Cardiac septum (tissue), 1 donor: ENCODE measurements at regions of chr10 and their contacts with region 1.

Region 1: DNA sequence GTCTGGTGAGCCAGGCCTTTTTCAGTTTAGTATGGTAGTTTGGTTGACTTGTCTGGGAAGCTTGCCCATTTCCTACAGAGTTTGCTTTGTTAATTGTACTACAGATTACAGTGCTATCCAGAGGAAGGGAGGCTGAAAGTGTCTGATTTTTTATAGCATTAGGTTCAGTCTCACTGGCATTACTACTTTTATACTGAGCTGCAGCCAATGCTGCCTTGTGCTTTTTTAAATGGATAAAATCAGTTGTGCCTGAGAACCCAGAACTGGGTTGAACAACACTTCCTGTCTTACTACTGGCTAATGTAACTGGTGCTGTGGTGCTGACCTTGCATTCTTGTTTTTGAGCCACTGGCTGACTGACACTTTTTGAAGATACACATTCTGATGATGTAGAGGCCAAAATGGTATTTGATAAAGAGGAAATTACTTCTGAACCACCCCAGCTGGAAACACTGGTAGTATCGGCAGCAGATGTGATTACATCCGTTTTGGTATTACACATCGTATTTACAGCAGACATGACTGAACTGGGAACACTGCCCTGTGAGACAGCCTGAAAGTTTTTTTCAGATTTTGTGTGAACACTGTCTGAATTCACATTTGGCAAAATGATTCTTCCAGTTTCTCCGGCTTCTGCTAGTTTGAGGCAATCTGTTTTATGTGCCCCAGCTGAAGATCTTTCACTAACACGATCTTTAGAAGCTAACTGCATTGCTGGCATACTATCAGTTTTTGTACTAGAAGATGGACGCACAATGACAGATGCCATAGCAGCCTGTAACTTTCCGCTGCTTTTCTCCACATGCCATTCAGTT is 74.1 kb downstream of the NRBF2 start:
- DNase-seq: no peak

Region 2: GRCh38 chr10:63013755-63014154 is 193.4 kb before region 1 on chr10:
- intact Hi-C with region 1: no loop called
- DNase-seq: no peak

Region 3: DNA sequence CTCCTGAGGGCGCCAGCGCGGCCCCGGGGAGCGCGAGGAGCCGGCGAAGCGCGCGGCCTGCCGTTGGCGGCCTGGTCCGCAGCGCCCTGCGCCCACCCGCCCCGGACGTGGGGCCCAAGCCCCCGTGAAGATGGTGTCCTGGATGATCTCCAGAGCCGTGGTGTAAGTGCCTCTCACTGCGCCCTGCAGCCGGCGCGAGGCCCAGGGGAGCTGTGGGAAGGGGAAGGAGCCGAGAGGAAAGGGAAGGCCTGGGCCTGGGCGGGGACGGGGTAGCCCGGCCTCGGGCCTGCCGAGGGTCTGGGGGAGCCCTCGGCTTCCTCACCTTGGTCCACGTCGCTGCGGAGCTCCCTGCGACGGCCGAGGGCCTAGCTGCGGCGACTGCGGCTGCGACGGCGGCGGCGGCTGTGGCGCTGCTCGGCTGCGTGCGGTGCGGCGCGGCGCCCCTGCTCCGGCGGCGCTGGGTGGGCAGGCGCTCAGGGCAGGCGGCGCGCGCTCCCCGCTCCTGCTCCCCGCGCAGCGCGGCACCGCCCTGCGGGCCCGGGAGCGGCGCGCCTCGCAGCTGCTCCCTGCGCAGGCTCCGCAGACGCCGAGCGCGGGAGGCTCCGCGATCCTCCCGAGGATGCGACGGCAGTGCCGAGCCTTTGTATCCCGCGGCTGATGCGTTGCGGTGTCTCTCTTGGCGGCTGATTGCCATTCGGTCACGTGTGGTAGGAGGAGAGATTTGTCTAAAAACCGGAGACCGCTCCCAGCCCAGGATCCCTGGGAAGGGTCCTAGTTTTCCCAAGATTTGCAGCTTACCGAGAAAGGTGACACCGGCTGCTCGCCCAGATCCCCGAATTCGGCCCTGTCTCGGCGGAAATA is 314.4 kb after region 1 on chr10:
- intact Hi-C with region 1: loop called (anchors 5 kb)
- DNase-seq: peak; percentile 90